Left colon (tissue), 2 donors: ENCODE measurements at regions of chr6 and their contacts with region 1.

Region 1: GRCh38 chr6:125099211-125100073 is 54.1 kb upstream of the TPD52L1 start:
- DNase-seq: peak; percentile 67 to 68
- ATAC-seq: peak; percentile 95

Region 2: DNA sequence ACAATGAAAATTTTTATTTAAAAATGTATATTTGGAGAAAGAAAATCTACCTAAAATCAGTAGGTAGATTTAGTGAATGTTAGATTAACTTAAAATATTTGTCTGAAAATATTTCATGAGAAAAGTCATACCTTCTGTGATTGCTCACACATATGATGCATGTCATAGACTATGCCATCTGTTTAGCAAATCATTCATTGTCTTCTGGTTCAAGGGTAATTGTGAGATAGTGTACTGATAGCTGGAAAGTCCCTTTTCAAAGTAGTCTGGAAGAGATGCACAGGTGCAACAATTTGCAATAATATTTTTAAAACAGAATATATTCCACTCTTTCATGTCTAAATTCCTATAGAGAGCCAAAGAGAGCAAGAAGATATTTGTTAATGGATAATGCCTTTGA is 158.2 kb before region 1 on chr6:
- intact Hi-C with region 1: no loop called
- DNase-seq: no peak
- ATAC-seq: no peak

Region 3: GRCh38 chr6:124958759-124959354 is 140.6 kb before region 1 on chr6:
- intact Hi-C with region 1: loop called in 1 of 2 experiments (anchors 10 kb)
- DNase-seq: no peak
- ATAC-seq: no peak

Region 4: GRCh38 chr6:125046107-125046925 is 53.1 kb before region 1 on chr6:
- intact Hi-C with region 1: no loop called
- DNase-seq: no peak
- ATAC-seq: no peak

Region 5: DNA sequence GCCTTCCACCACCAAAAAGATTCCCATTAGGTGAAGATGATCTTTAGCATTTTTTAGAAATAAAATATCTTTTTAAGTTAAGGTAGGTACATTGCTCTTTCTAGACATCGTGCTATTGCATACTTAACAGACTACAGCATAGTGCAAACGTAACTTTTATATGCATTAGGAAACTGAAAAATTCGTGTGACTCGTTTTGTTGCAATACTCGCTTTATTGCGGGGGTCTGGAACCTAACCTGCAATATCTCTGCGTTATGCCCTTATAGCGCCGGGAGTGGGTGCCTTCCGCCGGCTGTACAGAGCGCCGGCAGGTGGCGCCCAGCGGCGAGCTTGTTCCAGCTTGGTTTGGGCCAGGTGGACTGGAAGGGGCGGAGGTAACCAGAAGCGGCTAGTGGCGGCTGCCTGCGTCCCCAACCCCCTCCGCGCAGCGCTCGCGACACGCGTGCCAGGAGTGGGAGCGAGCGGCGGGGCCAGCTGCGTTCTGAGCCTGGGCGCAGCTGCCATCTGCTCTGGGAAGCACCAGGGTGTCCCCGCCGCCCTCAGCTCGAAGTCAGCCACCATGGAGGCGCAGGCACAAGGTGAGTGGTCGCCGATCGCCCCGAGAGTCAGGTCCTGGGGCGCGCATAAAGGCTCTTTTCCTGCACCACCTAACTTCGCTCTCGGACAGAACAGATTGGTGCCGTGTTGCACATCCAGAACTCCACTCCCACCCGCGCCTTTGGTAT is 54.1 kb after region 1 on chr6 and contains the start of gene TPD52L1:
- intact Hi-C with region 1: no loop called
- DNase-seq: peak; percentile 81 to 83
- ATAC-seq: peak; percentile 96
- total RNA-seq, gene TPD52L1: 11.4 to 15.8 TPM

Region 6: GRCh38 chr6:125287718-125288117 is 188.3 kb after region 1 on chr6:
- intact Hi-C with region 1: no loop called
- DNase-seq: no peak
- ATAC-seq: no peak